Heart left ventricle (tissue), 16 donors: ENCODE measurements at regions of chr10 and their contacts with region 1.

Region 1: DNA sequence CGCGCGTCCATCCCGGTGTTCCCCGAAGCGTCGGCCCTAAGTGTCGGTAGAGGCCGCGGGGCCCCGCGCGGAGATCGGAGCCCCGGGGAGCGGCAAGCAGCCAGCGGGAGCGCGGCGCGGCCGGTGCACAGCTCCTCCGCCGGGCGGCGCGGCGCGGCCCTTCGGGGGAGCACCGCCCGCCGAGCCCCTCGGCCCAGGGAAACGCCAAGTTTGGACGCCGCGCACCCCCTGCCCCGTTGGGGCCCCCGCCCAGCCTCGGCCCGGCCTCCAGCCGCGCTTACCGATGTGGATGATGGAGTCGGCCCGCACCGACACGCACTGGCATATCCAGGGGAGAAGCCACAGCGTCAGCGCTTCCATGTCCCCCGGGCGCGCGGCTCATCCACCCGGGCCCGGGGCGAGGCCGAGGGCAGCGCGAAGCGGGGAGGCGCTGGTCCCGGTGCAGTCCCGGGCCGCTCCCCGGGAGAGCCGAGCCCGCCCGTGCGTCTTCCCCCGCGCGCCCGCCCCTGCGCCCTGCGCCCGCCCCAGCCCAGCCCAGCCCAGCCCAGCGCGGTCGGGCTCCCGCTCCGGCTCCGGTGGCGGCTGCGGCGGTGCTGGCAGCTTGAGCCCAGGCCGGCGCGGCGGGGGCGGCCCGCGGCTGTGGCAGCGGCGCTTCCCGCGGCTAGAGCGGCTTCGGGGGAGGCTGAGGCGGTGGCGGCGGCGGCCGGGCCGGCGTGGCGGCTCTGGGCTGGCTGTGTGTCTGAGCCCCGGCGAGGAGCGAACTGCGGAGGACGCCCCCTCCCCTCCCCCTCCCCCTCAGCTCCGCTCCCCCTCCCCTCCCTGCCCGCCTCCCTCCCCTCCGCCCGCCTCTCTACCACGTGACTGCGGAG is at the start of gene GRID1:
- DNase-seq: peak in 3 of 5 donors; percentile 38 to 65 (median 48)
- ATAC-seq: peak in 3 of 4 donors; percentile 38 to 57 (median 46)
- H3K4me3 ChIP-seq: peak within 1 kb of the TSS; percentile 38 to 77 (median 62)
- H3K27ac ChIP-seq: peak within 1 kb of the TSS in 3 of 12 donors; percentile 43 to 74 (median 51)
- H3K4me1 ChIP-seq: peaks cover 0 to 54% (median 16%) of the 10 kb centered on the region in 12 donors
- H3K27me3 ChIP-seq: peaks cover 12 to 66% (median 30%) of the 10 kb centered on the region in 9 donors
- CTCF ChIP-seq: peak in 2 of 12 donors; percentile 15 to 27
- POLR2A ChIP-seq: no peak
- total RNA-seq, gene GRID1: 0.93 to 3.4 (median 1.6) TPM

Region 2: DNA sequence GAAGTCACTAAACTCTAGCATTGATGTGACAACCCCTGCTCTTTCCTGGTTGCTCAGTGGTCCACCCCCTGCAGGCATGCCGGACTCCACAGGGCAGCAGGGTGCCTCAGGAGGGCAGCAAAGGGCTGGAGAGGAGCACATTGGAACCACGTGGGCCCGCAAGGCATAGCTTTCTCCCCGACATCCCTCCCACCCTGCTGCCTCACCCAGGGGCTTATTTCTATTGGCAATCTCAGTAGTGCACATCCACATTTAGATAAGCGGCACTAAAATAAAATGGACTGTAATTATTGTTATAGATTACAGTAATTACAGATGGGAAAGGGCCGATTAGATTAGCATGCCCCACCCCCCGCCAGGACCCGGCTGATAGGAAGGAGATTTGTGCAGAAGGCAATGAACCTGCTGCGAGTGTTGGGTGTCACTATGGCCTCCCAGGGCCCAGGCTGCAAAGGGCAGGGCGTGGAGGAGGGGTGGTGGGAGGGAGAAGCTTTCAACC is 579.8 kb before region 1 on chr10:
- intact Hi-C with region 1: loop called in 7 of 10 experiments (anchors 5 to 10 kb)
- DNase-seq: peak in 1 of 5 donors; percentile 41
- ATAC-seq: peak in 3 of 4 donors; percentile 65 to 80 (median 67)
- H3K4me3 ChIP-seq: no peak overlapping the region
- H3K27ac ChIP-seq: no peak overlapping the region
- H3K4me1 ChIP-seq: peaks cover 0 to 5% (median 0%) of the 10 kb centered on the region in 12 donors
- H3K27me3 ChIP-seq: no peaks in the 10 kb centered on the region
- CTCF ChIP-seq: peak; percentile 15 to 59 (median 36)
- POLR2A ChIP-seq: no peak

Region 3: DNA sequence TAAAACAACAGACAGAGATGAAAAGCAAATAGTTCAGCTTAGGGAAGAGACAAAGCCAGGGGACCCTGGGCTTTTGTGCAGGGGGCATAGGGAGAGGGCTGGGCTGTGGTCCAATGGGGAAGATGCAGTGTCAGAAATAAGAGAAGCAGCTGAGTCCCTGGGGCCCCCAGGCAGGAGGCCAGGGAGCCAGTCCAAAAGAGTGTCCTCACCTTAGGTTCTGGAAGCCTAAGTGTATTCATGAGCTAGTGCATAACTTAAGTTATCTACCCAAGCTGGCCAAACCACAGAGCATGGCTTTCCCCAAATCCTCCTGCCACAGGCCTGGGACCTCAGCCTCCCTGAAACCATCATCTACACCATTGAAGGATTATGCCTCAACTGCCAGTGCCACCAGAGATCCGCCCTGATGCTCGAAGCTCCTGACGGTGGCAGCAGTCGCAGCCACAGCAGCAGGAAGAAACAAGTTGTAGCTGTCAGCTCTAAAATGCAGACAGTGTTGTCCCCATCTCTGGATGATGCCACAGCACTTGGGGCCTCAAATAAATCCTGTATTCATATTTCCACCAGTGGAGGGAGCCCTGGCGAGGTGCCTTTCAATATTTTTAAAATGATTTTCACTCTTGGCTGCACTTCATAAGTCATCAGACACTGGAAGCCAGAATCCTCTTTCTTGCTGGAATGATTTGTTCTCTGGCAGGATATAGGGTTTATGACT is 574.3 kb before region 1 on chr10:
- intact Hi-C with region 1: loop called in 7 of 10 experiments (anchors 5 to 10 kb)
- DNase-seq: no peak
- ATAC-seq: peak in 2 of 4 donors; percentile 13 to 25
- H3K4me3 ChIP-seq: no peak overlapping the region
- H3K27ac ChIP-seq: no peak overlapping the region
- H3K4me1 ChIP-seq: peaks cover 0 to 9% (median 2%) of the 10 kb centered on the region in 12 donors
- H3K27me3 ChIP-seq: no peaks in the 10 kb centered on the region
- CTCF ChIP-seq: peak in 10 of 12 donors; percentile 14 to 57 (median 32)
- POLR2A ChIP-seq: no peak

Region 4: DNA sequence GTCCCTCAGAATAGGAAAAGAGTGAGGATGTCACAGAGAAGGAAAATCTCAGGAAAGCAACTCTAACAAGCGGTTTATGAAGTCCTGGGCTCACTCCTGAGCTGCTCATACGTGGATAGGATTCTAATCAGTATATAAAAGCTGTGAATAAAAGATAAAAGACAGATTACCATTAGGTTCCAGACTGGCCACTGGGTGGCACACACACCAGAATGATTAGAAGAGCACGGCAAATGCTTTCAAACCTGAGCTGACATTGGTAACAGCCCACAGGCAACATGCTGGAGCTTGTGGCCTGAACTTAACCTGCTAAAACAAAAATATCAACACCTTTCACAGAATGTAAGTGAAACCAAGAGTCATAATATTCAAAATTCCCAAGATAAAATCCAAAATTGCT is 370.5 kb before region 1 on chr10:
- intact Hi-C with region 1: loop called in 4 of 10 experiments (anchors 10 kb)
- DNase-seq: no peak
- ATAC-seq: peak in 1 of 4 donors; percentile 55
- H3K4me3 ChIP-seq: no peak overlapping the region
- H3K27ac ChIP-seq: no peak overlapping the region
- H3K4me1 ChIP-seq: no peaks in the 10 kb centered on the region
- H3K27me3 ChIP-seq: peaks cover 0 to 4% (median 0%) of the 10 kb centered on the region in 9 donors
- CTCF ChIP-seq: peak in 11 of 12 donors; percentile 11 to 50 (median 39)
- POLR2A ChIP-seq: no peak

Region 5: GRCh38 chr10:86024281-86025041 is 341.8 kb before region 1 on chr10:
- intact Hi-C with region 1: loop called in 1 of 10 experiments (anchors 10 kb)
- DNase-seq: peak in 4 of 5 donors; percentile 28 to 65 (median 42)
- ATAC-seq: peak; percentile 92 to 93 (median 93)
- H3K4me3 ChIP-seq: no peak overlapping the region
- H3K27ac ChIP-seq: peak overlapping the region in 10 of 12 donors; percentile 23 to 85 (median 62)
- H3K4me1 ChIP-seq: peaks cover 0 to 26% (median 7%) of the 10 kb centered on the region in 12 donors
- H3K27me3 ChIP-seq: no peaks in the 10 kb centered on the region
- CTCF ChIP-seq: peak in 4 of 12 donors; percentile 10 to 37 (median 20)
- POLR2A ChIP-seq: no peak

Region 6: DNA sequence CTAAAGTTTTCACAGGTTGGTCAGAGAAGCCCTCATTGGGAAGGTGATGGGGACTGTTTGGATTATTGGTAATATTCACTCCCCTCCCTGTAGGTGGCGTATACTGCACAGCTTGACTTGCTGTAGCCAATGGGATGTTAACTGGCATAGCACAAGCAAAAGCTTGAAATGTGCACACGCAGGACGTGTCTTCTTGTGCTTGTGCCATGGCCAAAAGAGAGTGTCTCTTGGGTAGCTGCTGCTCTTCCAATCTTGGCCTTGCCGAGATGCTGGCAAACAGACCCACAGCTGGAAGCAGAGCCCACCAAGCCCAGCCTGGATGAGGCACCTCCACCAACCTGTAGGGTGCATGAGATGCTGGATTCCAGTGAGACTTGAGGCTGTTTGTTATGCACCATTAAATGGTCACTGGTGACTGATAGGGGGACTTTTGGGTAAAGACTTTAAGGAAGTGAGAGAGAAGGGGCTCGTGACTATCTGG is 265.6 kb before region 1 on chr10:
- intact Hi-C with region 1: loop called in 4 of 10 experiments (anchors 5 to 10 kb)
- DNase-seq: no peak
- ATAC-seq: peak in 1 of 4 donors; percentile 49
- H3K4me3 ChIP-seq: no peak overlapping the region
- H3K27ac ChIP-seq: no peak overlapping the region
- H3K4me1 ChIP-seq: no peaks in the 10 kb centered on the region
- H3K27me3 ChIP-seq: no peaks in the 10 kb centered on the region
- CTCF ChIP-seq: peak in 7 of 12 donors; percentile 6 to 47 (median 33)
- POLR2A ChIP-seq: no peak

Region 7: GRCh38 chr10:86139066-86139657 is 227.1 kb before region 1 on chr10:
- intact Hi-C with region 1: no loop called
- DNase-seq: no peak
- ATAC-seq: no peak
- H3K4me3 ChIP-seq: no peak overlapping the region
- H3K27ac ChIP-seq: no peak overlapping the region
- H3K4me1 ChIP-seq: no peaks in the 10 kb centered on the region
- H3K27me3 ChIP-seq: no peaks in the 10 kb centered on the region
- CTCF ChIP-seq: peak in 8 of 12 donors; percentile 9 to 45 (median 22)
- POLR2A ChIP-seq: no peak